ENCODE measurements at regions of chrX and their contacts with region 1.

Region 1: GRCh38 chrX:6803607-6804006 is 268.7 kb upstream of the VCX3A start:
- DNase-seq: no peak
- ATAC-seq: no peak
- H3K4me3 ChIP-seq: no peak overlapping the region
- H3K27ac ChIP-seq: no peak overlapping the region
- H3K4me1 ChIP-seq: no peaks in the 10 kb centered on the region
- H3K27me3 ChIP-seq: no peaks in the 10 kb centered on the region
- CTCF ChIP-seq: no peak
- POLR2A ChIP-seq: no peak
- RAD21 ChIP-seq: no peak

Region 2: DNA sequence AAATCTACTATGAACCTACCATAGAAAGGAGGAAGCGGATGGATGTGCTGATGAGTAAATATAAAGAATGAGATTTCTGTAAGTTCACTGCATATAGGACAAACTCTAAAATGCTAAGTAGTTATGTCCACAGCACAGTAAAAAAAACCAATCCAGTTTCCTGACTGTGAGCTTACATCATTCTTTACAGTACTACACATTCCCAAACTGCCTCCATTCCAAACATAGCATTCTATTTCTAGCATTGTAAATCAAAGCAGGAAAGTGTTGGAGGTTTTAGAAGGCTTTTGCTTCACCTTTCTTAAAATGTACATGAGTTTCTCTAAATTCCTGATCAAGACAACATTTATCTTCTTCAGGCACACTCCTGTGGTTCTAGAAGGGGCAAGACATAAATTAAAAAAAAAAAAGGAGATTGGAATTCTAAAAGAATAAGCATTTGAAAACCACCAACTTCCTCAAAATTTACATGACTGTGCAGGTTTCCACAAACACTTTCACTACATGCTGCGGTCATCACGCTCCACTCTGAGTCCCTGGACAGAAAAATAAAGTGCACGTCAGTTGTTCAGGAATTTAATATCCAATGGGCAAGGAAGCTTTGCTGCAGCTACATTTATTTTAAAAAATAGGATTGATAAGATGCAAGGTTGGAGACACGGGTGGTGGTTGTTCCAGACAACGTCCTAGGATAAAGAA is 46.3 kb after region 1 on chrX:
- CTCF ChIA-PET with region 1: no interaction called
- POLR2A ChIA-PET with region 1: no interaction called
- dilution Hi-C with region 1: no loop called
- in situ Hi-C with region 1: no loop called
- intact Hi-C with region 1: loop called (anchors 1 kb)
- DNase-seq: peak; percentile 2
- ATAC-seq: peak; percentile 42; the same call in 1 of the 2 replicates
- H3K4me3 ChIP-seq: no peak overlapping the region
- H3K27ac ChIP-seq: no peak overlapping the region
- H3K4me1 ChIP-seq: no peaks in the 10 kb centered on the region
- H3K27me3 ChIP-seq: no peaks in the 10 kb centered on the region
- CTCF ChIP-seq: no peak
- POLR2A ChIP-seq: no peak
- RAD21 ChIP-seq: no peak

Region 3: DNA sequence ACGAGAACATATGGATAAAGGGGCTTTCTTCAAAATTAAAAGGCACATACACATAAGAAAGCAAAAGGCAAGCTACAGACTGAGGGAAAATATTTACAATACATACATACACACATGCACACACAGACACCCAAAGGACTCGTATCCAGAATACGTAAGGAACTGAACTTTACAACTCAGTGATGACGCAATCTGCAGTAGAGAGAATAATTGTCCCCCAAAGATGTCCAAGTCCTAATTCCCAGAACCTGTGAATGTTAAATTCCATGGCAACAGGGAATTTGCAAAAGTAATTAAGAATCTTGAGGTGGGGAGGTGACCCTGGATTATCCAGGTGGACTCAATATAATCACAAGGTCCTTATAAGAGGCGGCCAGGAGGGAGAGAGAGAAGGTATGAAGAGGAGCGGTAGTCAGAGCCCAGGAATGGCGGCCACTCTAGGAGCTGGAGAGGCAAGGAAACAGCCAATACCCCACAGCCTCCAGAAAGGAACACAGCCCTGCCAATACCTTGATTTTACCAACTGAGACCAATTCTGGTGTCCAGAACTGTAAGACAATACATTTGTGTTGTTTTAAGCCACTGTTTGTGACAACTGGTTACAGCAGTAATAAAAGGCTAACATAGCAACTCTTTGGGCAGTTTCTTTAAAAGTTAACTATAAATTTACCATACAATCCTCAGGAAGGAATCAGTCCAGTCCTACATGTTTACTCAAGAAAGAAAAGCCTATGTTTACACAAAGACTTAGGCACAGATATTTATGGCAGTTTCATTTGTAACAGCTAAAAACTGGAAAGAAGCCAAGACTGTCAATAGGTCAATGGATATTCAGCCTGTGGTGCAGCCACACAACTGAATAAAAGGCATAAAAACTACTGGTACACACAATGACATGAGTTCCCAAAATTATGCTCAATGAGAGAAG is 316.6 kb after region 1 on chrX:
- CTCF ChIA-PET with region 1: no interaction called
- POLR2A ChIA-PET with region 1: no interaction called
- dilution Hi-C with region 1: no loop called
- in situ Hi-C with region 1: no loop called
- intact Hi-C with region 1: no loop called
- DNase-seq: peak; percentile 58
- ATAC-seq: peak; percentile 79
- H3K4me3 ChIP-seq: no peak overlapping the region
- H3K27ac ChIP-seq: no peak overlapping the region
- H3K4me1 ChIP-seq: peaks cover 7% of the 10 kb centered on the region; the same call in 1 of the 2 replicates
- H3K27me3 ChIP-seq: no peaks in the 10 kb centered on the region
- CTCF ChIP-seq: no peak
- POLR2A ChIP-seq: no peak
- RAD21 ChIP-seq: no peak